Ovary (tissue), 10 donors: ENCODE measurements at regions of chr1 and their contacts with region 1.

Region 1: DNA sequence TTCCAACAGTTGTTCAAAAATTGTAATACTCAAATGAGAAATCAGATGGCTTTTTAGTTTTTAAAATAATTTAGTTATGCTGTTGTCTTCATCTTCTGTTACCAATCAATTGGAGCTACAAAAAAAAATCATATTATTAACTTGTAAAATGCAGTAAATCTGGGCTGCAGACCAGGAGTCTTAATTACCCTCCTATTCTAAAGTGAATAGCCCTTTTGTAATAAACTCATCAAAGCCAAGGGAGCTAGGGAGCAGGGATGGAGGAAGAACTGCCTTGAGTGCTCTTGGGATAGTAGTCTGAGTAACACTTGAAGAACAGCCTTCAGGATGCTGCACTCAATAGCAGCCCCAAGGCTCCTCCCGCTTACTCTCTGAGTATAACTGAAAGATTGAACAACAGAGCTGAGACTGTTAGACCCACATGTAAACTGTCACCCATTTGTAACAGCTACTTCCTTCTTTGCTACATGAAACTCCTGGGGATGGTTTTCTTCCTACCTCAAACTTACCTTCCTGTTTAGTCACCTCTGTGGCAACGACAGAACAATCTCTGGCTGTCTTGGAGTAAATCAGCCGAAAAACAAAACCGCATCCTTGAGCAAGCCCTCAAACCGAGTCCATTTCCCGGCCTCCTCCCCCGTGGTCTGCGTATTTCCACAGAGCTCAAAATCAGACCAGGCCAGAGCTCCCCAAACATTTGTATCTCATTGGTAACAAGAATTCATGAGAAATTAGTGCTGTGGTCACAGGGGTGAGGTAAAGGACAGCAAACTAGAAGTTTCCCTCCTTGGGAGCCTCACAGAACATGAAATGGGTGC is 55.9 kb downstream of the CD58 start:
- DNase-seq: no peak
- H3K4me3 ChIP-seq: no peak overlapping the region
- H3K27ac ChIP-seq: no peak overlapping the region
- H3K4me1 ChIP-seq: no peaks in the 10 kb centered on the region
- H3K27me3 ChIP-seq: no peaks in the 10 kb centered on the region
- CTCF ChIP-seq: no peak
- EP300 ChIP-seq: no peak
- POLR2A ChIP-seq: no peak

Region 2: GRCh38 chr1:115727706-115728249 is 787.1 kb before region 1 on chr1:
- intact Hi-C with region 1: no loop called
- DNase-seq: peak; percentile 46 to 81 (median 64)
- H3K4me3 ChIP-seq: no peak overlapping the region
- H3K27ac ChIP-seq: peak overlapping the region in 1 of 2 donors; percentile 35
- H3K4me1 ChIP-seq: peaks cover 10% of the 10 kb centered on the region
- H3K27me3 ChIP-seq: no peaks in the 10 kb centered on the region
- CTCF ChIP-seq: no peak
- EP300 ChIP-seq: no peak
- POLR2A ChIP-seq: no peak

Region 3: GRCh38 chr1:116540088-116540487 is 25.2 kb after region 1 on chr1:
- intact Hi-C with region 1: loop called in 1 of 4 experiments (anchors 2 kb)
- DNase-seq: no peak
- H3K4me3 ChIP-seq: no peak overlapping the region
- H3K27ac ChIP-seq: no peak overlapping the region
- H3K4me1 ChIP-seq: no peaks in the 10 kb centered on the region
- H3K27me3 ChIP-seq: no peaks in the 10 kb centered on the region
- CTCF ChIP-seq: no peak
- EP300 ChIP-seq: no peak
- POLR2A ChIP-seq: no peak